ENCODE measurements at regions of chr4 and their contacts with region 1.

Region 1: GRCh38 chr4:82284858-82285805 is 88.7 kb downstream of the HNRNPD start:
- DNase-seq: peak; percentile 98 to 100 (median 99)
- ATAC-seq: peak; percentile 88
- H3K4me3 ChIP-seq: peak overlapping the region; percentile 57
- H3K4me3 Mint-ChIP-seq: peak overlapping the region; percentile 85
- H3K27ac ChIP-seq: peak overlapping the region in 1 of 2 donors; percentile 69
- H3K27ac Mint-ChIP-seq: peak overlapping the region; percentile 80
- H3K4me1 ChIP-seq: peaks cover 12% of the 10 kb centered on the region
- H3K4me1 Mint-ChIP-seq: peaks cover 19% of the 10 kb centered on the region
- H3K27me3 ChIP-seq: no peaks in the 10 kb centered on the region
- H3K27me3 Mint-ChIP-seq: no peaks in the 10 kb centered on the region
- CTCF ChIP-seq: peak; percentile 96

Region 2: GRCh38 chr4:82217986-82218715 is 67.0 kb before region 1 on chr4:
- CTCF ChIA-PET with region 1: no interaction called
- POLR2A ChIA-PET with region 1: interaction called, 6 read pairs
- intact Hi-C with region 1: loop called in 1 of 2 experiments (anchors 1 kb)
- DNase-seq: peak in 4 of 14 experiments; percentile 24 to 42 (median 38)
- ATAC-seq: no peak
- H3K4me3 ChIP-seq: no peak overlapping the region
- H3K4me3 Mint-ChIP-seq: no peak overlapping the region
- H3K27ac ChIP-seq: no peak overlapping the region
- H3K27ac Mint-ChIP-seq: no peak overlapping the region
- H3K4me1 ChIP-seq: peaks cover 6% of the 10 kb centered on the region
- H3K4me1 Mint-ChIP-seq: peaks cover 36% of the 10 kb centered on the region
- H3K27me3 ChIP-seq: no peaks in the 10 kb centered on the region
- H3K27me3 Mint-ChIP-seq: no peaks in the 10 kb centered on the region
- CTCF ChIP-seq: peak; percentile 53

Region 3: DNA sequence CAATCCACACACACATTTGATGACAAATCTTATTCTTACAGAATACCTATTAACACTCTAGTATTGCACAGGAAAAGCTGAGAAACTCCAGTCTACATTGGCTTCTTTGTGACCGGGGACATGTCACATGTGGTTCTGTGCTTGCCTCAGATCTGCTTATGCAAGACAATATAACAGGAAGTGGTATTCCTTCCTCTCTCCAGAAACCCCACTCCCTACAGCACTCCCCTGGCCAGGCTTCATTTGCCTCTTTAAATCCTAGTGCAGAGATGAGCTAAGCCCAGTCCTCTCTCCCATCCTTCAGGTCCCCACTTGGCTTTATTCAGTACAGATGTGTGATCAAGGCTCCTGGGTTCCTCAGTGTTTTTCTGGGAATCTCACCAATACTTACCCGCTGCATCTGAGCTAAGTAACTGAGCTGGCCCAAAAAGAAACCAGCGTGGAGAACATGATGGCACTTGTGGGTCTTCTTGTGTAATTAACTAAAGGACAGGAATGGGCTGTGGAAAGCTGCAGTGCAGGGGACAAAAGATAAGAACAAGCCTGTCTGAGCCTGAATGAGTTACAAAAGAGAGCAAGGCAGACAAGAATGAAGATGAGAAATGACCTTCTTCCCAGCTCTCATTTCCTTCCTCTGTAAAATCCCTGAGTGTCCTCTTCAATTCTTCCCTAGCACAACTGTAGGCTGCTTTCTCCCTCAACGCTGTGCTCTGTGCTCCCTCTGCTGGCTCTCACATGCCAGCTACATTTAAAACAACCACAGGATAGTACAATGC is 16.9 kb before region 1 on chr4:
- CTCF ChIA-PET with region 1: interaction called, 5 read pairs
- POLR2A ChIA-PET with region 1: interaction called, 10 read pairs
- intact Hi-C with region 1: no loop called
- DNase-seq: peak in 12 of 14 experiments; percentile 12 to 76 (median 34)
- ATAC-seq: peak; percentile 92
- H3K4me3 ChIP-seq: no peak overlapping the region
- H3K4me3 Mint-ChIP-seq: peak overlapping the region; percentile 70
- H3K27ac ChIP-seq: no peak overlapping the region
- H3K27ac Mint-ChIP-seq: peak overlapping the region; percentile 11
- H3K4me1 ChIP-seq: peaks cover 18% of the 10 kb centered on the region
- H3K4me1 Mint-ChIP-seq: peaks cover 34% of the 10 kb centered on the region
- H3K27me3 ChIP-seq: no peaks in the 10 kb centered on the region
- H3K27me3 Mint-ChIP-seq: no peaks in the 10 kb centered on the region
- CTCF ChIP-seq: peak; percentile 91

Region 4: DNA sequence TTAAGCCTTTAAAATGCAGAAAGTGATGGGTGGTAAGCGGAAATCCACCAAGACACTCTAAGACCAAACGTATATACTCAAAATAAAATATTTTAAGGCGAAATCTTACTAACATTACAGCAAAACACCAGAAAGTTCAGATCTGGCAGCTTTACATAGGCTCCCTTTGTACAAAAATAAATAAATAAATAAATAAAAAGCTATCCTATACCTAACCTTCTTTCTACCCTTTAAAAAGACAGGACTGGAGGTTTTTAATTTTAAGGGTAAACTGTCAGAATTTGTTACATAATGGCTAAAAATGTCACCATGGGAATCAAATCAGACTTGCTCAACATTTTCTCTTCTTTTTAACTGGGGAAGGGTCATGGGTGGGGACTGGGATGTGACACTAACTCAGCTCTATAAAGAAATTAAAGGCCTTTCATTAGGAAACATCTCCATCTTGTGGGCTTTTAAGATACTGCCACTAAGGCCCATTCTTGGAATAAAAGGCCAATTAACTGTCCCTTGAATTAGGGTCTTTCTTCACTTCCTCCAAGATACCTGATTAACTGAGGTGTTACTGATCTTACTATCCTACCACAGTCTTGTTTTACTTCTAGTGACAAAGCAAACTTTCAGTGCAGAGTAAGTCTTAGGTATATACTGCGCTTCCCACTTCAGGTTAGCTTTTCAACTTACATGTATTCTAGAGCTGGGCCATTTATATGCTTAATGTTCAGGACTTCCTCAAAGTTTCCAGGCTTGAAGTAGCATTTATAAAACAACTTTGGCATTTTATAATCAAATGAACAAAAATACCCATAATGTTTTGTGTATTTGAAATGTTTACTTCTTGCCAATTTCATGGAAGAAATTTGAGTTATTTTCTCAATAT is 75.4 kb after region 1 on chr4:
- CTCF ChIA-PET with region 1: interaction called, 3 read pairs
- POLR2A ChIA-PET with region 1: no interaction called
- intact Hi-C with region 1: loop called in 1 of 2 experiments (anchors 5 kb)
- DNase-seq: peak in 3 of 14 experiments; percentile 50 to 61 (median 61)
- ATAC-seq: peak; percentile 80
- H3K4me3 ChIP-seq: no peak overlapping the region
- H3K4me3 Mint-ChIP-seq: peak overlapping the region; percentile 36
- H3K27ac ChIP-seq: peak overlapping the region in 1 of 2 donors; percentile 7
- H3K27ac Mint-ChIP-seq: peak overlapping the region; percentile 60
- H3K4me1 ChIP-seq: peaks cover 25% of the 10 kb centered on the region
- H3K4me1 Mint-ChIP-seq: peaks cover 96% of the 10 kb centered on the region
- H3K27me3 ChIP-seq: peaks cover 0 to 2% of the 10 kb centered on the region in 2 experiments
- H3K27me3 Mint-ChIP-seq: no peaks in the 10 kb centered on the region
- CTCF ChIP-seq: peak; percentile 72

Region 5: GRCh38 chr4:82681754-82682153 is 396.6 kb after region 1 on chr4:
- CTCF ChIA-PET with region 1: no interaction called
- POLR2A ChIA-PET with region 1: no interaction called
- intact Hi-C with region 1: no loop called
- DNase-seq: peak in 1 of 14 experiments; percentile 2
- ATAC-seq: no peak
- H3K4me3 ChIP-seq: no peak overlapping the region
- H3K4me3 Mint-ChIP-seq: no peak overlapping the region
- H3K27ac ChIP-seq: no peak overlapping the region
- H3K27ac Mint-ChIP-seq: no peak overlapping the region
- H3K4me1 ChIP-seq: no peaks in the 10 kb centered on the region
- H3K4me1 Mint-ChIP-seq: no peaks in the 10 kb centered on the region
- H3K27me3 ChIP-seq: peaks cover 4% of the 10 kb centered on the region in 2 experiments
- H3K27me3 Mint-ChIP-seq: peaks cover 20% of the 10 kb centered on the region
- CTCF ChIP-seq: no peak

Region 6: DNA sequence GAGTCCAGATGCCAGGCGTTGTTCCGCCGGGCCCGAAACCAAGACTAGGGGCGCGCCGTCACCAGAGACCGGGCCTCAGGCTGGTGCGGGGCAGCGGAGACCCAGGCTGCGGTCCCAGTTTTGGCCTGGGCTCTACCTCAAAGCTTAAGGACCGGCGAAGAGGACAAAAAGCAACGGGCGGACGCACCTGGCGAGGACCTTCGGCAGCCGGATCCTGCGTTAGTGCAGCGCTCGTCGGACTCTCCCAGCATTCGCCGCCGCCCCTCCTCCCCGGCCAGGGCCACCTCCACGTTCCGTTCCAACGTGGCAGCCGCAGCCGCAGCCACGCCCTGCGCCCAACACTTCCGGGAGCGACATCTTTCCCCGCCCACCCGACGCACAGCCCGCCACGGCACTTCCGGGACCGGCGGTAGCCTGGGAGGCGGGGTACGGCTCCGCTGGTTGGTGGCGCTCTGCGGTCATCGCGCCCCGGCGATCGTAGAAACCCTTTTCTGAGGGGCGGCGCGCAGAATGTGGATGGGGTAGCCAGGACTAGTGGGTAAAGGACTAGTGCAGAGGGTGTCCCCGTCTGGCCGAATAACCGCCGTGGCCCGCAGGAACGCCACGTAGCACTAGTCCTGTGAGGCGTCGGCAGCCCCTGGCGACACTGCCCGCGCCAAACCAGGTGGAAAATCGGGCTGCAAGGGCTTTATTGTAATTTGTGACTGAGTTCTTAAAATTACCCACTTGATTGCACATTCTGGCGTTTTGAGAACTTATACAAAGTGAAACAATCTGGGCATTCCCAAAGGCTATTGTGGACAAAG is 606.0 kb after region 1 on chr4 and contains the start of gene SEC31A:
- CTCF ChIA-PET with region 1: no interaction called
- POLR2A ChIA-PET with region 1: no interaction called
- intact Hi-C with region 1: loop called in 1 of 2 experiments (anchors 10 kb)
- DNase-seq: peak; percentile 93 to 99 (median 96)
- ATAC-seq: peak; percentile 91
- H3K4me3 ChIP-seq: peak within 1 kb of the TSS; percentile 93
- H3K4me3 Mint-ChIP-seq: peak within 1 kb of the TSS; percentile 91
- H3K27ac ChIP-seq: peak within 1 kb of the TSS; percentile 87 to 95
- H3K27ac Mint-ChIP-seq: peak within 1 kb of the TSS; percentile 99
- H3K4me1 ChIP-seq: peaks cover 11% of the 10 kb centered on the region
- H3K4me1 Mint-ChIP-seq: peaks cover 49% of the 10 kb centered on the region
- H3K27me3 ChIP-seq: no peaks in the 10 kb centered on the region
- H3K27me3 Mint-ChIP-seq: no peaks in the 10 kb centered on the region
- CTCF ChIP-seq: no peak
- total RNA-seq, gene SEC31A: 130 to 131 TPM

Region 7: DNA sequence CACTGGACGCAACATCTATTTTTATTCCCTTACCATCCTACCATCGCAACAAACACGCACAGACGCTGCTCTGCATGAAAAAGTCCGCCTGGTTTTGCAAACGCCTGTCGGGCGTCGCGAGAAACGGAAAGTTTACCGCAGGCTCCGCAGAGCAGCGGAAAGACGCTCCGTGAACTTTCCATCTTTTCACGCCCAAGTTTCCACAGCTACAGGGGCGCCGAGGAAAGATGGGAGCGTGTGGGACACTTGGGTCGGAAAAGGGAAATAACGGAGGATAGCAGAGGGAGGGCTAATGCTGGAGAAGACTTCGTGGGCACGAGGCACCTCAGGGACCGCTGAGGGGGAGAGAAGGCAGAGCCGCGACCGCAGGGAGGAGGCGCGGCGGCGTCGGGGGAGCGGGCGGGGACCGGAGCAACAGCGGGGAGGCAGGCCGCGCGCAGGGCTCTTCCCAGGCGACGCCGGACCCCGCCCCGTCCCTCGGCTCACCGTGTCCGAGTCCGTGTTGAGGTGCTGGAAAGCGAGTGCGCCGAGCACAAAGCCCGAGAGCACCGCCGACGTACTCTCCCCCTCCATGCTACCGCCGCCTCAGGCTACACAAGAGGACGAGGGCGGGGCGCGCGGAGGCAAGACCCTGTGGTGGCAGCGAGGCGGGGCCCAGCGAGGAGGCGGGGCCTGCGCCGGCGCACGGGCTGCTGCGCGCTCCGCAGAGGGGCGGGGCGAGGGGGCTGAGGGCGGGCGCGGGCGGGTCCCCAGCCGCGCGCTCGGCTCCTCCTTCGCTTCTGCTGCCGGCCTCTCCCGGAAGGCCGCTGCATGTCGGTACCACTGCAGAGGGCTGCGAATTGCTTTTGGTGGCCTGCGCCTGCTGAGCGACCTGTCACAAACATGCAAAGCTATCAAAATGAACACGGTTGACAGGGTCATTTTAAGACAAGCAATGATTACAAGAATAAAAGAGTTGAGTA is 1199.6 kb after region 1 on chr4 and contains the start of gene ABRAXAS1:
- CTCF ChIA-PET with region 1: interaction called, 3 read pairs
- POLR2A ChIA-PET with region 1: no interaction called
- intact Hi-C with region 1: loop called in 1 of 2 experiments (anchors 5 kb)
- DNase-seq: peak; percentile 87 to 99 (median 94)
- ATAC-seq: peak; percentile 91
- H3K4me3 ChIP-seq: peak within 1 kb of the TSS; percentile 71
- H3K4me3 Mint-ChIP-seq: peak within 1 kb of the TSS; percentile 94
- H3K27ac ChIP-seq: peak within 1 kb of the TSS; percentile 47 to 71
- H3K27ac Mint-ChIP-seq: peak within 1 kb of the TSS; percentile 92
- H3K4me1 ChIP-seq: peaks cover 17% of the 10 kb centered on the region
- H3K4me1 Mint-ChIP-seq: peaks cover 32% of the 10 kb centered on the region
- H3K27me3 ChIP-seq: no peaks in the 10 kb centered on the region
- H3K27me3 Mint-ChIP-seq: no peaks in the 10 kb centered on the region
- CTCF ChIP-seq: no peak
- total RNA-seq, gene ABRAXAS1: 19.3 to 19.5 TPM